Endothelial cell of umbilical vein (primary cell): ENCODE measurements at regions of chr12 and their contacts with region 1.

Region 1: GRCh38 chr12:24596768-24597388 is 352.0 kb downstream of the BCAT1 start:
- DNase-seq: peak; percentile 60
- H3K4me3 ChIP-seq: no peak overlapping the region
- H3K27ac ChIP-seq: no peak overlapping the region
- H3K4me1 ChIP-seq: peaks cover 13% of the 10 kb centered on the region
- H3K27me3 ChIP-seq: peaks cover 0 to 7% of the 10 kb centered on the region in 2 experiments
- CTCF ChIP-seq: peak; percentile 41 to 58
- POLR2A ChIP-seq: no peak

Region 2: DNA sequence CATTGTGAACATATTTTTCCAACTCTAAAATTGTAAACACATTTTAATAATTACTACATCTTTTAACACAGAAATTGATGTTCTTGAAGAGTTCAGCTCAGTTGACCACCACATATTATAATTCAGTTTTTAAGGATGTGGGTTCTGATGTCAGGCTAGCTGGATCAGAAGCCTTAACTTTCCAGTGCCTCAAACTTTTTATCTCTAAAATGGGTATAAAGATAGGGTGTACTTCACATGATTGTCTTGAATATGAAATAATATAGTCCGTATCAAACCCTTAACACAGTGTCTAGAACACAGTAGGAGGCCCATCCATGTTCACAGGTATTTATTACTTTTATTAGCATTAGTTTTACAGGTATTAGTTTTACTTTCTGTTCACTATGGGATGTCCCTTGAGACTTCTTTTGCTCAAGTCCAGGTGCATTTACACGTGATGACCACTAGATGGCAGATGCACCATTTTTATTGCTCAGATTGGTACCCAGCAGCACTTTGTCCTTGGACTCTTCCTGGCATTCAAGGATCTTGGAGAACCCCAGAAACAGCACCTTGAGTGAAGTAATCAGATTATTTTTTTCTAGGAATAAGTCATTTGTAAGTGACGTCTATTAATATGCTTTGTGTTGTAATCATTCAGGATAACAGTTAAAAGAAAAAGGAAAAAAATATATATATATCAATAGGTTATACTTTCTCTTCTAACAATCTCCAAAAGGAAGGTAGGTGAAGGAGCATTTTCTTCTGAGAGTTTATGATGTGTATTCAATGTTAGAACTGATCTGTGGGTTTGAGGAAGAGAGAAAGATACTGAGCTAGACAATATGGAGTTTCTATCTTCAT is 1391.7 kb before region 1 on chr12:
- CTCF ChIA-PET with region 1: no interaction called
- POLR2A ChIA-PET with region 1: no interaction called
- dilution Hi-C with region 1: no loop called
- intact Hi-C with region 1: loop called (anchors 10 kb)
- DNase-seq: peak; percentile 65
- H3K4me3 ChIP-seq: no peak overlapping the region
- H3K27ac ChIP-seq: no peak overlapping the region
- H3K4me1 ChIP-seq: no peaks in the 10 kb centered on the region
- H3K27me3 ChIP-seq: peaks cover 0 to 3% of the 10 kb centered on the region in 2 experiments
- CTCF ChIP-seq: peak; percentile 67 to 74
- POLR2A ChIP-seq: no peak

Region 3: DNA sequence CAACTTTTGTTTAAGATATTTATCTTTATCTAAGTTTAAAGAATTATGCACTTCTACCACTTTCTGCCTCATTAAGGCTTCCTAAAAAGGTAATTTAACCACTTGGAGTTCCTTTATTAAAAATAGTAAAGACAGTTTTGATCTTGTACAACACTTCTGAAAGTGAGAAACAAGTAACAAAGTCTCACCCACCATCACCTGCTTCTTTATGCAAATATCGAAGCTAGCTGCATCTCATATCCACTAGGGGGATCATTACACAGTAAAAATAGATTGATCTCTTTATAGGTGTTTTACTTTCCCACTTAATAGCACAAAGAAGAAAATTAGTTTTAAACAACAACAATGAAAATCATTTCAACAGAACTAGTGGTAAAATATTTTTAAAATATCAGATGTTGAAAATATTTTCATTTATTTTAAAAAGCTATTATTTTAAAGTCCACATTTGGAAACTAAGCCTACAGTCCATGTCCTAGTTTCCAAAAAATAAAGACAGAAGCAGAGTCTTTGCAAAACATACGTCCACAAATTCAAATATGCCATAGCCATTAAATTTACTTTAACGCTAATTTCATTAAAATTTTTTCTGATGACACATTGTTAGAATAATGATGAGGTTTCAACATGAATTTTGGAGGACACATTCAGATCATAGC is 487.4 kb before region 1 on chr12:
- CTCF ChIA-PET with region 1: interaction called, 8 read pairs
- POLR2A ChIA-PET with region 1: no interaction called
- dilution Hi-C with region 1: no loop called
- intact Hi-C with region 1: loop called (anchors 2 kb)
- DNase-seq: peak; percentile 32
- H3K4me3 ChIP-seq: no peak overlapping the region
- H3K27ac ChIP-seq: no peak overlapping the region
- H3K4me1 ChIP-seq: peaks cover 11% of the 10 kb centered on the region
- H3K27me3 ChIP-seq: no peaks in the 10 kb centered on the region
- CTCF ChIP-seq: peak; percentile 39 to 51
- POLR2A ChIP-seq: no peak

Region 4: DNA sequence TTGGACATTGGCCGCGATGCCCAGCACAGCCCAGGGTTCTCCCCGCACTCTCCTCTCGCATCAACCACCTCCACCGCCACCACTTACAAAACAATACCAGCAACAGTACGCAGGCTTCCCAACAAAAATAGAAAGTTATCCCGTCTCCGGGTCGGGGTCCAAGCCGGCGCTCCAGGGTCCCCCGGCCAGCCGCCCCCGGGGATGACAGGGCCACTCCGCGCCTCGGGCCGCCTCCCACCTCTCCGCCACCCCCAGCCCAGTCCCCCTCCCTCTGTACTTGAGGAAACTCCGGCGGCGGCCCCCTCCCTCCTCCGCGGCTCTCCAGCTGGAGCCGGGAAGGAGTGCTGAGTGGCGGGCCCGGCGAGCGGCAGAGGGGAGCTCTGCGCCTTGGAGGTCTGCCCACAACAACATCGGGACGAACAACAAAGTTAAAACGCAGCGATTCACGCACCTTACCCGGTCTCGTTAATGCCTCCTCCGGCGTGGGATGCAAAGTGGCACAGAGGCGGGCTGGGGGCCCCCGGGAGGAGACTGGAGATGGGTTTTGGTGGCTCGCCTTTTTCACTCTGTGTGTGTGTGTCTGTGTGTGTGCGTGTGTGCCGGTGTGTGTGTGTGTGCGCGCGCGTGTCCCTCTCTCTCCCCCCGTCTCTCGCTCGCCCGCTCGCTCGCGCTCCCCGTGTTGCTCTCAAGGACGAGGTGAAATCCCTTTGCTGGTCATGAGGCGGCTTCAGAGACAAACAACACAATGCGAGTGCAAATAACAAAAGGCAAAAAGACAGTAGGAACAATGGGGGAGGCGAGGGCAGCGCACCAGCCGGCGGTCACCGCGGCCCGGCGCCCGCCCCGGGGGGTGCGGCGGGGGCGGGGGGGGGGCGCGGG is 34.8 kb before region 1 on chr12:
- CTCF ChIA-PET with region 1: interaction called, 4 read pairs
- POLR2A ChIA-PET with region 1: no interaction called
- dilution Hi-C with region 1: no loop called
- intact Hi-C with region 1: loop called (anchors 2 kb)
- DNase-seq: peak; percentile 60
- H3K4me3 ChIP-seq: peak overlapping the region; percentile 43 to 87 (median 73)
- H3K27ac ChIP-seq: no peak overlapping the region
- H3K4me1 ChIP-seq: peaks cover 7% of the 10 kb centered on the region
- H3K27me3 ChIP-seq: peaks cover 22 to 34% of the 10 kb centered on the region in 2 experiments
- CTCF ChIP-seq: no peak
- POLR2A ChIP-seq: no peak

Region 5: DNA sequence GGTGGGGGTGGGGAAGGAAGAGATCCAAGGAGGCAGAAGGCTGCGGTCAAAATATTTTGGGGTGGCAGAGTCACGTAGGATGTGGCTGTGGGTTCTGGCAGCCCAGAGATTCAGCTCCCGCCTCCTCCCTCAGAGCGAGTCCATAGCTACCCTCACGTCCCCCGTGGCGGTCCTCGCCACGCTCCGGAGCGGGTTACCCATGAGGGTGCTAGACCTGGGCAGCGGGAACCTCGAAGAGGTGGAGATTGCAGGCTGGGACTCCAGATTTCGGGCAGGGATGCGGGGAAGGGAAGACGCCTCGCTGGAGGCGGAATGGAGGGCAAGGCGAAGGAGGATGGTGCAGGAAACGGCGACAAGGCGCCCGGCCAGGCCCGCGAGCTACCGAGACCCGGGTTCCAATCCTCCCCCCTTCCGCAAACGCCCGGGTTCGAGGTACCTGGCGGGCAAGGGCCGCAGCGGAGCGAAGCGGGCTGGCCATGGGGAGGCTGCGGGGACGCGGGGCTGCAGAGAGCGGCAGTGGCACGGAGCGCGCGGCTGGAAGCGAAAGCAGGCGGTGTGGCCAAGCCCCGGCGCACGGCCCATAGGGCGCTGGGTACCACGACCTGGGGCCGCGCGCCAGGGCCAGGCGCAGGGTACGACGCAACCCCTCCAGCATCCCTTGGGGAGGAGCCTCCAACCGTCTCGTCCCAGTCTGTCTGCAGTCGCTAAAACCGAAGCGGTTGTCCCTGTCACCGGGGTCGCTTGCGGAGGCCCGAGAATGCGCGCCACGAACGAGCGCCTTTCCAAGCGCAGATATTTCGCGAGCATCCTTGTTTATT is 305.8 kb after region 1 on chr12:
- CTCF ChIA-PET with region 1: no interaction called
- POLR2A ChIA-PET with region 1: no interaction called
- dilution Hi-C with region 1: no loop called
- intact Hi-C with region 1: loop called (anchors 5 kb)
- DNase-seq: no peak
- H3K4me3 ChIP-seq: peak overlapping the region; percentile 24 to 94 (median 58)
- H3K27ac ChIP-seq: peak overlapping the region; percentile 100
- H3K4me1 ChIP-seq: peaks cover 61% of the 10 kb centered on the region
- H3K27me3 ChIP-seq: no peaks in the 10 kb centered on the region
- CTCF ChIP-seq: no peak
- POLR2A ChIP-seq: no peak